OCI-LY7 (cell line): ENCODE measurements at regions of chr9 and their contacts with region 1.

Region 1: GRCh38 chr9:34098307-34098706 is 28.2 kb downstream of the DCAF12 start:
- DNase-seq: peak; percentile 88
- H3K4me3 ChIP-seq: peak overlapping the region; percentile 61
- H3K27ac ChIP-seq: peak overlapping the region; percentile 98
- H3K4me1 ChIP-seq: peaks cover 59% of the 10 kb centered on the region
- CTCF ChIP-seq: no peak

Region 2: GRCh38 chr9:34126207-34127034 is 28.1 kb after region 1 on chr9 and contains the start of gene DCAF12:
- CTCF ChIA-PET with region 1: no interaction called
- POLR2A ChIA-PET with region 1: interaction called, 7 read pairs
- intact Hi-C with region 1: loop called (anchors 1 kb)
- DNase-seq: peak; percentile 91
- H3K4me3 ChIP-seq: peak within 1 kb of the TSS; percentile 85
- H3K27ac ChIP-seq: peak within 1 kb of the TSS; percentile 81
- H3K4me1 ChIP-seq: peaks cover 49% of the 10 kb centered on the region
- CTCF ChIP-seq: no peak
- total RNA-seq, gene DCAF12: 21.9 and 31.7 TPM in 2 replicates

Region 3: DNA sequence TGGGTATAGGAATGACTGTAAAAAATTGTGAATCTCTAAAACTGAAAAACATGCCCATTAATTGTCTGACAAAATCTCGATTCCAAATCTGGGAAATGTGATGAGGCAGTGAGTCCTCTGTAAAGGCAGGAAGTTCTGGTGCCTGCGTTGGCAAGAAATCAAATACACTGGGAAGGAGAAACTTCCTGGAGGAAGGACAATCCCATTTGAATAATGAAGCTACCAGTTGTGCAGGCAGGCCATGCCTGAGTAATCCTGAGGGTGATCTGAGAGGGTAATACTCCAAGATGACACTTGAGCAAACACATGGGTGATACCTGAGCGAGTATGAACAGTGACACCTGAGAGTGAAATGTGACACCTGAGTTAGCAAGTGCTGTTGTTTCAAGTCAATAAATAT is 181.1 kb after region 1 on chr9:
- CTCF ChIA-PET with region 1: no interaction called
- POLR2A ChIA-PET with region 1: no interaction called
- intact Hi-C with region 1: no loop called
- DNase-seq: no peak
- H3K4me3 ChIP-seq: no peak overlapping the region
- H3K27ac ChIP-seq: no peak overlapping the region
- H3K4me1 ChIP-seq: no peaks in the 10 kb centered on the region
- CTCF ChIP-seq: no peak